ENCODE measurements at regions of chr1 and their contacts with region 1.

Region 1: DNA sequence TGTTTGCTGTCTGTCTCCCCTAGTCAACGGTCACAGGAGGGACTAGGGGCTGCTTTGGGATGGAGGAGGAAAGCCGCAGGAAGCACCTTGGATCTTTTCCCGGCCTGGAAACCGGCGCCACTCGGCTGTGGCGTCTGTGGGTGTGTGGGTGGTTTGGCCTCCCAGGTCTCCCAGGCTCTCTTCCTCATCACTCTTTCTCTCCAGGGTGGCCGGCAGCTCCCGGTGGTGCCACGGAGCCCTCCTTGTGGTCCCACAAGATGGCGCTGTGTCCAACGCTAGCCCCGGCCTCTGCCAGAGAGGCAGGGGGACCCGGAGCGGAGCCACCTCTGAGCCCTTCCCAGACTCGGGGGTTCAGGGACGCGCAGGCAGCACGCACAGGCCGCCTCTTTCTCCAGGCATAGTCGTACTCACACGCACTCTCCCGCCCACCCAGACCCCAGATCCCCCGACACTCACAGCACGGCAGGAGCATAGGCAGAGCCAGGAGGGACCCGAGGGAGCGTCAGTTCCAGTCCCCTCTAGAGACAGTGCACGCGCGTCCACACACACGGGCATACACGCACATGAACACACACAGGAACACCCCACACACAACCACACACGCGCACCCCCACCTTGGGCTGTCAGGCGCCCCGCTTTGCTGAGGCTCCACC is 31.2 kb downstream of the CDCP2 start:
- DNase-seq: peak; percentile 90 to 94 (median 94)
- ATAC-seq: peak; percentile 96
- H3K4me3 ChIP-seq: peak overlapping the region; percentile 17
- H3K27ac ChIP-seq: no peak overlapping the region
- H3K4me1 ChIP-seq: peaks cover 7 to 21% of the 10 kb centered on the region in 2 experiments; a peak in 4 of 5 replicates
- H3K27me3 ChIP-seq: peaks cover 3 to 18% of the 10 kb centered on the region in 2 experiments; a peak in 3 of 5 replicates
- CTCF ChIP-seq: peak; percentile 91 to 93 (median 92)
- EP300 ChIP-seq: peak; percentile 27; the same call in 1 of the 2 replicates
- POLR2A ChIP-seq: no peak
- RAD21 ChIP-seq: peak; percentile 89 to 93

Region 2: DNA sequence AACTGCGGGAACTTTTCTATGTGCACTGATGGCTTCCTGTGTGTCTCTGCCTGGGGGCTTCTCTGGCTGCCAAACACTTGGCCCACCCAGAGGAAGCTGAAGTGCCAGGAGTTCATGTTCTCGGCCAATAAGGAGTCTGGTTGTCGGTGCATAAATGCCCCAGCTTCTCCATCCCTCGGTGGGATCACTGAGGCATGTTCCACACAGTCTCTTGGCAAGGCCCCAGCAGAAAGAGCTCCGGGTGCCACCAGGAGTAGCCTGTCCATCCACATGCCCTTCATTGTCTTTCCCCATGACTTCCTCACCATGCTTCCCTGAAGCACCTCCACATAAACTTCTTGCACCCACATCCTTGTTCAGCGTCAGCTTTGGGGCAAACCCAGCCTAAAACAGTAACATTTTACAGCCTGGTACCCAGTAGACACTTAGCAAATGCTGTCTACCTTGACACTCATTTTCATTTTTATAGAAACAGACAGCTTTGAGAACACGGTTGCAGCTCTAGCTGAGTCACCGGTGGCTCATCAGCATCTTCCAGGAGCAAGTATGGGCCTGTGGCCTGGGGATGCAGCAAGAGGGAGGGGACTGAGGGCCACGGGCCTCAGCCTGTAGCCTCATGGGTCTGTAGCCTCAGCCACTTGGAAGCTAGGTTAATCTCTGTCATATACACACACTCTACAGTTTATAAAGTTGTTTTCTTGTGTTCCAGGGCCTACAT is 46.0 kb after region 1 on chr1:
- CTCF ChIA-PET with region 1: no interaction called
- POLR2A ChIA-PET with region 1: interaction called, 3 read pairs
- in situ Hi-C with region 1: no loop called
- intact Hi-C with region 1: loop called (anchors 5 kb)
- DNase-seq: no peak
- ATAC-seq: no peak
- H3K4me3 ChIP-seq: no peak overlapping the region
- H3K27ac ChIP-seq: no peak overlapping the region
- H3K4me1 ChIP-seq: peaks cover 12 to 20% of the 10 kb centered on the region in 2 experiments; a peak in 4 of 5 replicates
- H3K27me3 ChIP-seq: no peaks in the 10 kb centered on the region
- CTCF ChIP-seq: no peak
- EP300 ChIP-seq: no peak
- POLR2A ChIP-seq: no peak
- RAD21 ChIP-seq: no peak

Region 3: GRCh38 chr1:54199765-54200518 is 78.3 kb after region 1 on chr1 and contains the starts of genes CYB5RL and MRPL37:
- CTCF ChIA-PET with region 1: no interaction called
- POLR2A ChIA-PET with region 1: no interaction called
- in situ Hi-C with region 1: no loop called
- intact Hi-C with region 1: loop called (anchors 5 kb)
- DNase-seq: peak; percentile 99 to 100 (median 100)
- ATAC-seq: peak; percentile 96
- H3K4me3 ChIP-seq: peak within 1 kb of the TSS; percentile 85
- H3K27ac ChIP-seq: peak within 1 kb of the TSS; percentile 83
- H3K4me1 ChIP-seq: peaks cover 20 to 24% of the 10 kb centered on the region in 2 experiments; a peak in 4 of 5 replicates
- H3K27me3 ChIP-seq: no peaks in the 10 kb centered on the region
- CTCF ChIP-seq: peak in 1 of 3 experiments; percentile 15; a peak in 1 of 6 replicates
- EP300 ChIP-seq: no peak; the same call in 1 of the 2 replicates
- POLR2A ChIP-seq: peak; percentile 95
- RAD21 ChIP-seq: 0 out of 4 replicates have a peak, but pooled peaks of 1 of the 2 experiments have one; percentile 10
- polyA plus RNA-seq, gene CYB5RL: 8.8 to 8.9 TPM
- polyA plus RNA-seq, gene MRPL37: 52.2 to 79.7 TPM

Region 4: DNA sequence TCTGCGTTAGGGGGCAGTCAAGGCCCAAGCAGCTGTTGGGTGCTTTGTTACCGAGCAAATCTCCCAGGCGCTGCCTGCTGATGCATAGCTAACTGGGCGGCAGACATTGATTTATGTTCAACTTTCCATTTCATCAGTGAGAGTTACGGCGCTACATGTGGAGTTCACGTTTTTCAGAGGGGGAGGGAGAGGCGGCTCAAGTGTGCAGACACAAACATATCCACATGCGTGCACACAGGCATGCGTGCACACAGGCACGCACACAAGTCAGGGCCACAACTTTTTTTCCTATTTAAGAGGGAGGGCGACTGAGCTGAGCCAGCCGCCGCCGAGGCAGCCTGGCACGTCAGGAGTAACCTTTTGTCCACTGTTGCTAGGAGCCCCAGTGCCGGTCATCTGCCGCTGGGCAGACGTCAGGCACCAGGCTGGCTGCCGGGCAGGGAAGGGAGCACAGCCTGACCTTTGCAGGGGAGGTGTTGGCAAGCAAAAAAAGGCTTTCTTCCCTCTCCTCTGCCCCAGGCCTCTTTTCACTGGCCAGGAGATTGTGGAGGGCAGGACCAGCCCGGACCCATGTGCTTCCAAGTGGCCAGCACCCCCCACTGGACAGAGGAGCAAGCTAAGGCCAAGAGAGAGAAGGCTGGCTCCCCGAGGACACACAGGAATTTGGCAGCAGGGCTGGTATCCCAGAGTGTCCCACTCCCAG is 151.6 kb after region 1 on chr1:
- CTCF ChIA-PET with region 1: no interaction called
- POLR2A ChIA-PET with region 1: no interaction called
- in situ Hi-C with region 1: no loop called
- intact Hi-C with region 1: loop called (anchors 5 kb)
- DNase-seq: peak; percentile 69 to 88 (median 77)
- ATAC-seq: peak; percentile 88
- H3K4me3 ChIP-seq: no peak overlapping the region; the same call in 1 of the 2 replicates
- H3K27ac ChIP-seq: peak overlapping the region; percentile 71
- H3K4me1 ChIP-seq: peaks cover 43 to 44% of the 10 kb centered on the region in 2 experiments
- H3K27me3 ChIP-seq: no peaks in the 10 kb centered on the region
- CTCF ChIP-seq: peak; percentile 73 to 83 (median 81); a peak in 5 of 6 replicates
- EP300 ChIP-seq: no peak; the same call in 1 of the 2 replicates
- POLR2A ChIP-seq: no peak
- RAD21 ChIP-seq: peak; percentile 76 to 94

Region 5: GRCh38 chr1:54499360-54500106 is 377.9 kb after region 1 on chr1:
- CTCF ChIA-PET with region 1: no interaction called
- POLR2A ChIA-PET with region 1: interaction called, 3 read pairs
- in situ Hi-C with region 1: loop called (anchors 5 kb)
- intact Hi-C with region 1: no loop called
- DNase-seq: peak; percentile 48 to 61 (median 56)
- ATAC-seq: peak; percentile 79
- H3K4me3 ChIP-seq: peak overlapping the region; percentile 33
- H3K27ac ChIP-seq: no peak overlapping the region
- H3K4me1 ChIP-seq: peaks cover 6 to 15% of the 10 kb centered on the region in 2 experiments; a peak in 4 of 5 replicates
- H3K27me3 ChIP-seq: peaks cover 30 to 68% of the 10 kb centered on the region in 2 experiments
- CTCF ChIP-seq: peak; percentile 29 to 62 (median 61); a peak in 4 of 6 replicates
- EP300 ChIP-seq: no peak
- POLR2A ChIP-seq: no peak
- RAD21 ChIP-seq: peak; percentile 45 to 52

Region 6: GRCh38 chr1:54671985-54672608 is 550.5 kb after region 1 on chr1:
- CTCF ChIA-PET with region 1: no interaction called
- POLR2A ChIA-PET with region 1: no interaction called
- in situ Hi-C with region 1: no loop called
- intact Hi-C with region 1: loop called (anchors 10 kb)
- DNase-seq: peak; percentile 69 to 86 (median 80)
- ATAC-seq: peak; percentile 93
- H3K4me3 ChIP-seq: no peak overlapping the region
- H3K27ac ChIP-seq: no peak overlapping the region
- H3K4me1 ChIP-seq: no peaks in the 10 kb centered on the region
- H3K27me3 ChIP-seq: peaks cover 13 to 19% of the 10 kb centered on the region in 2 experiments; a peak in 4 of 5 replicates
- CTCF ChIP-seq: peak; percentile 92 to 97 (median 95)
- EP300 ChIP-seq: no peak
- POLR2A ChIP-seq: no peak
- RAD21 ChIP-seq: peak; percentile 91 to 98

Measured in K562 (cell line).